ENCODE measurements at regions of chr19 and their contacts with region 1.

Region 1: DNA sequence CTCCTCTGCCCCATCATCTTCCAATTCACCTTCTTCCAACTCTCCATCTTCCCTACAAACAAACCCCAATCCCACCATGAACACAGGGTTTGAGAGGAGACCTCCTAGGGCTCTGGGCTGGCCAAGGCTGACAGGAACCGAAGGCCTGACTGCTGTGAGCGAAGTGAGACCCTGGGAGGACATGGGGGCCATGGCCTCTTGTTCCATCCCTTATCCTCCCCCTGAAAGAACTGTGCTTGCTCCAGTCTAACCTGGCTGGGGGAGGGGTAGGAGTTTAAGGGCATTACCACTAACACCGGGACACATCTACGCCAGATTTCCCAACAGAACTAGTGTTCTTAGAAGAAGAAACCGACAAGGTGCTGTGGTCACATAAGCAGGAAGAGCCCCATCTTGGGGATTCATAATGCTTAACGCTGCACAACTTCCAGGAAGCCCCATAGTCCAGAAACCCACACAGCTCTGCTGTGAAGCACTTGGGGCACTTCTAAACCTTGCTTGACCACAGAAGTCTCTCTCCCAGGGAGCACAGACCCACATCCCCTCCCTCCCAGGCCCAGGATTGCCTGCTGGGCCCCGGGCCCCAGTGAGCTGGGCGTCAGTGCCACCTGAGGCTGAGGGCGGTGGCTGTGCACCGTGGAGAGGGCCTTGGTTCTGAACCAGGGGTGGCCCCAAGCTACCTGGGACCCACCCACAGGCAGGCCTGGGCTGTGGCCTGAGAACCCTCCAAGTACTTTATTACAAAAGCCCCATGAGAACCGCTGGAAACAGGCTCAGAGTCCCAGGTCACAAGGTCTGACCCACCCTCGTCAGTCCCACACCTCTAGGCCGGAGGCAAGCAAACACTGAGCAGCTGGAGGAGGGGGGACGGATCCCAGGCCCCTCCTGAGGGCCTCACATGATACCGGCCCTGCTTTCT is 18.8 kb downstream of the ZC3H4 start:
- DNase-seq: peak in 4 of 5 donors; percentile 33 to 50 (median 45)
- H3K4me3 ChIP-seq: peak overlapping the region in 1 of 2 donors; percentile 21
- H3K4me3 Mint-ChIP-seq: peak overlapping the region; percentile 10 to 82 (median 67)
- H3K27ac ChIP-seq: peak overlapping the region; percentile 77
- H3K27ac Mint-ChIP-seq: peak overlapping the region; percentile 94 to 98 (median 96)
- H3K4me1 ChIP-seq: peaks cover 42% of the 10 kb centered on the region
- H3K4me1 Mint-ChIP-seq: peaks cover 24 to 70% (median 44%) of the 10 kb centered on the region in 4 donors
- H3K27me3 ChIP-seq: no peaks in the 10 kb centered on the region
- H3K27me3 Mint-ChIP-seq: no peaks in the 10 kb centered on the region

Region 2: DNA sequence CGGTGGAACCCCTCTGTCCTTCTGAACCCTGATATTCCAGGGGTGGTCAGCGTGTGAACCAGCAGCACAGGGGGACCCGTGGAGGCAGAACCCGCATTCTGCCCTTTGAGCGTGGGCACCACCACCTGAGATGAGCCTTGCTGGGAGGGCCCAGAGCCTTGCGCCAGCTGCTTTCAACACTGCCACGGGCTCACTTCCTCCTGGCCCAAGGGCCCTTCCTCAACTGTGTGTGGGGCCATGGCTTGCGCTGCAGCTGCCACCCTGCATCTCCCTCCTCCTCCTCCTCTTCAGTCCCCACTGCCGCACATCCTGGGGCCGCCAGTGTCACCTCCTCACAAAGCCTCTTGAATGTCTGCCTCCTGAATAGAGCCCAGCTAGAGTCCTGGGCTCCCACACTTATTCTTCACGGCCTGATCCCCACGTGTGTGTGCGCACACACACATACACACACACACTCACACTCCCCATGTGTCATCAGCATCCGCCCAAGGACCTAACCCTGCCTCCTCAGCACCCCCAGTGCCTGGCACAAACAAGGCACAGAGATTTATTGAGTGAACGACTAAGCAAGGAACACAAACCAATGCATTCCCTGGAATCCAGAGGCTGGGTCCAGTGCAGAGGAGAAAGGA is 19.5 kb before region 1 on chr19:
- CTCF ChIA-PET with region 1: interaction called, 46 read pairs
- POLR2A ChIA-PET with region 1: no interaction called
- intact Hi-C with region 1: no loop called
- DNase-seq: no peak
- H3K4me3 ChIP-seq: no peak overlapping the region
- H3K4me3 Mint-ChIP-seq: no peak overlapping the region
- H3K27ac ChIP-seq: no peak overlapping the region
- H3K27ac Mint-ChIP-seq: peak overlapping the region in 4 of 7 donors; percentile 57 to 86 (median 82)
- H3K4me1 ChIP-seq: no peaks in the 10 kb centered on the region
- H3K4me1 Mint-ChIP-seq: peaks cover 0 to 9% (median 5%) of the 10 kb centered on the region in 4 donors
- H3K27me3 ChIP-seq: no peaks in the 10 kb centered on the region
- H3K27me3 Mint-ChIP-seq: no peaks in the 10 kb centered on the region

Region 3: GRCh38 chr19:47081111-47081510 is 13.7 kb before region 1 on chr19:
- CTCF ChIA-PET with region 1: interaction called, 46 read pairs
- POLR2A ChIA-PET with region 1: interaction called, 12 read pairs
- intact Hi-C with region 1: no loop called
- DNase-seq: no peak
- H3K4me3 ChIP-seq: no peak overlapping the region
- H3K4me3 Mint-ChIP-seq: no peak overlapping the region
- H3K27ac ChIP-seq: no peak overlapping the region
- H3K27ac Mint-ChIP-seq: peak overlapping the region in 1 of 7 donors; percentile 24
- H3K4me1 ChIP-seq: no peaks in the 10 kb centered on the region
- H3K4me1 Mint-ChIP-seq: peaks cover 0 to 4% (median 0%) of the 10 kb centered on the region in 4 donors
- H3K27me3 ChIP-seq: no peaks in the 10 kb centered on the region
- H3K27me3 Mint-ChIP-seq: no peaks in the 10 kb centered on the region